ENCODE measurements at regions of chr9 and their contacts with region 1.

Region 1: GRCh38 chr9:20941174-20941690 is 90.2 kb downstream of the HACD4 start:
- DNase-seq: peak; percentile 4 to 80 (median 45)
- ATAC-seq: peak; percentile 90
- H3K4me3 ChIP-seq: no peak overlapping the region
- H3K4me3 Mint-ChIP-seq: no peak overlapping the region
- H3K27ac ChIP-seq: no peak overlapping the region
- H3K27ac Mint-ChIP-seq: no peak overlapping the region
- H3K4me1 ChIP-seq: peaks cover 3% of the 10 kb centered on the region
- H3K4me1 Mint-ChIP-seq: peaks cover 3% of the 10 kb centered on the region
- H3K27me3 ChIP-seq: no peaks in the 10 kb centered on the region
- H3K27me3 Mint-ChIP-seq: no peaks in the 10 kb centered on the region
- CTCF ChIP-seq: peak; percentile 82

Region 2: DNA sequence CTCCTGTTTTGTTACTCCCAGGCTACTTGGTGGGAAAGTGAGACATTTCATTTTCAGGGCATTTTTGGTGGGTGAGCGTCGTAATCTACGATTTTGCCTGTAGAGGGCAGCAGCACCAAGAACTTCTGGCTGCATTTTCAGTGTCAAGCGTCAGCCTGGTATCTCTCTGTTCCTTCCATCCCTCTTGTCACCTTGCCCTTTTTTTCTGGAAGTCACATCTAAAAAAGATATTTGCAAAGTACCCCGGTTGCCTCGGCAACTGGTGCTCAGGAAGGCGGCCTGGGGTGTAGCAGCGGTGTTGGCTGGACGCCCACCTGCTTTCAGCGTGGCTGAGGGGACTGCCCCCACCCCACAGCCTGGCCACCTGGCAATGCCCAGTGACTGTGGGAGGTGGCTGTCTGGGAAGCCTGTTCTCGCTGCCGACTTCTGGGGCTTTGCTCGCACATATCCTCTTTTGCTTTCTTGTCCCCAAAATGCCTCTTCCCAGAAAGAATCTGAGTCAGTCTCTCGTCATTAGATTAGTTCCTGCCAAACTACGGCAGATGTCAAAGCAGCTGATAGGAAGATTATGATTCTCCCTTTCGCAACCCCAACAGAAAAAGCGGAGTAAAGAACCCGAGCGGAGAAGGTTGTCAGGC is 1447.9 kb before region 1 on chr9:
- CTCF ChIA-PET with region 1: interaction called, 3 read pairs
- POLR2A ChIA-PET with region 1: no interaction called
- intact Hi-C with region 1: loop called in 1 of 2 experiments (anchors 5 kb)
- DNase-seq: peak in 6 of 9 experiments; percentile 10 to 60 (median 42)
- ATAC-seq: peak; percentile 63
- H3K4me3 ChIP-seq: no peak overlapping the region
- H3K4me3 Mint-ChIP-seq: peak overlapping the region; percentile 40
- H3K27ac ChIP-seq: no peak overlapping the region
- H3K27ac Mint-ChIP-seq: no peak overlapping the region
- H3K4me1 ChIP-seq: no peaks in the 10 kb centered on the region
- H3K4me1 Mint-ChIP-seq: peaks cover 9% of the 10 kb centered on the region
- H3K27me3 ChIP-seq: no peaks in the 10 kb centered on the region
- H3K27me3 Mint-ChIP-seq: peaks cover 15% of the 10 kb centered on the region
- CTCF ChIP-seq: peak; percentile 76

Region 3: DNA sequence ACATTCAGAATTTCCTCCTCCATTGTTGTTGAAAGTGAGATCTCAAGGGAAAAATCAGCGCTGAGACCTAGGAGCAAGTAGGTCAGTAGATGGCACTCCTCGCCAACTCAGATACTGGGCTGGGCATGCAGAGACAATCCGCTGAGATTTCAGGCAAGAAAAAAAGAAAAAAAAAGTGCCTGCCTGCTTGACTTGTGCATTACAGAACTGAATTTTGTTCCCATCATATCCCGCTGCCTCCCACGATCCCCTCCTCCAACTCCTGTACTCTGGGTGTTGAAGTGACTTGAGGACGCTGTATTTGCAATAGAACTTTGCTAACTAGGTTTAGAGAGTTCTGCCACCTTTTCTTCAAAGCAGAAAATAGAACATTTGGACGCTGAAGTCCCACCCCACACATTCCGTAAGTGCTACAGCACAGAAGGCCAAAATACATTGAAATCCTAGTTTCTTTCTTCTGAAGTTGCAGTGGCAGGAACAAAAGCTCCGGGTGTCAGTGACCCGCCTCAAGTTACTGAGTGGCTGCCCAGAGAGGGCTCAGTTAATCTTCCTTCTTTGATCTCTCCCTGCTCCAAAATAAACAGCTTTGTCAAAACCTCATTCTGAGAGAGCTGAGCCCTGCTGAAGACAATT is 584.7 kb before region 1 on chr9:
- CTCF ChIA-PET with region 1: interaction called, 10 read pairs
- POLR2A ChIA-PET with region 1: no interaction called
- intact Hi-C with region 1: loop called (anchors 1 kb)
- DNase-seq: peak; percentile 6 to 69 (median 42)
- ATAC-seq: peak; percentile 75
- H3K4me3 ChIP-seq: no peak overlapping the region
- H3K4me3 Mint-ChIP-seq: no peak overlapping the region
- H3K27ac ChIP-seq: no peak overlapping the region
- H3K27ac Mint-ChIP-seq: no peak overlapping the region
- H3K4me1 ChIP-seq: peaks cover 7% of the 10 kb centered on the region
- H3K4me1 Mint-ChIP-seq: peaks cover 38% of the 10 kb centered on the region
- H3K27me3 ChIP-seq: no peaks in the 10 kb centered on the region
- H3K27me3 Mint-ChIP-seq: no peaks in the 10 kb centered on the region
- CTCF ChIP-seq: peak; percentile 59

Region 4: GRCh38 chr9:20552874-20553575 is 388.2 kb before region 1 on chr9:
- CTCF ChIA-PET with region 1: interaction called, 3 read pairs
- POLR2A ChIA-PET with region 1: no interaction called
- intact Hi-C with region 1: loop called (anchors 2 to 5 kb)
- DNase-seq: peak in 2 of 9 experiments; percentile 7 to 29
- ATAC-seq: peak; percentile 17
- H3K4me3 ChIP-seq: no peak overlapping the region
- H3K4me3 Mint-ChIP-seq: peak overlapping the region; percentile 10
- H3K27ac ChIP-seq: no peak overlapping the region
- H3K27ac Mint-ChIP-seq: peak overlapping the region; percentile 23
- H3K4me1 ChIP-seq: peaks cover 37% of the 10 kb centered on the region
- H3K4me1 Mint-ChIP-seq: peaks cover 81% of the 10 kb centered on the region
- H3K27me3 ChIP-seq: no peaks in the 10 kb centered on the region
- H3K27me3 Mint-ChIP-seq: no peaks in the 10 kb centered on the region
- CTCF ChIP-seq: peak; percentile 27

Region 5: DNA sequence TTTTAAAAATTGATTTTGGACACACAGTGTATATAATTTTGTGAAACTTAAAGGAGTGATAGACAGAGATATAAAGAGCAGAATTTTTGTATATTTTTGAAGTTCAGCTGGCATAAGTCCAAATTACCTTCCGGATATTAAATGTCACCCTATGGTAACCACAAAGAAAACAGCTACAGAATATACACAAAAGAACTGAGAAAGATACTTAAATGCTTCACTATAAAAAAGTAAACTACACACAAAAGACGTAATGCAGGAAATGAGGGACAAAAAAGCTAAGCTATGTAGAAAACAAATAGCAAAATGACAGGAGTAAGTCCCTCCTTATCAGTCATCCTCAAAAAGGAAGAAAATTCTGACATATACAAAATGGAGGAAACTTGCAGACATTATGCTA is 60.8 kb after region 1 on chr9:
- CTCF ChIA-PET with region 1: no interaction called
- POLR2A ChIA-PET with region 1: no interaction called
- intact Hi-C with region 1: no loop called
- DNase-seq: peak in 2 of 9 experiments; percentile 23 to 49
- ATAC-seq: peak; percentile 63
- H3K4me3 ChIP-seq: no peak overlapping the region
- H3K4me3 Mint-ChIP-seq: peak overlapping the region; percentile 16
- H3K27ac ChIP-seq: peak overlapping the region in 1 of 2 experiments; percentile 67
- H3K27ac Mint-ChIP-seq: peak overlapping the region; percentile 87
- H3K4me1 ChIP-seq: peaks cover 4% of the 10 kb centered on the region
- H3K4me1 Mint-ChIP-seq: peaks cover 25% of the 10 kb centered on the region
- H3K27me3 ChIP-seq: no peaks in the 10 kb centered on the region
- H3K27me3 Mint-ChIP-seq: no peaks in the 10 kb centered on the region
- CTCF ChIP-seq: no peak

Region 6: DNA sequence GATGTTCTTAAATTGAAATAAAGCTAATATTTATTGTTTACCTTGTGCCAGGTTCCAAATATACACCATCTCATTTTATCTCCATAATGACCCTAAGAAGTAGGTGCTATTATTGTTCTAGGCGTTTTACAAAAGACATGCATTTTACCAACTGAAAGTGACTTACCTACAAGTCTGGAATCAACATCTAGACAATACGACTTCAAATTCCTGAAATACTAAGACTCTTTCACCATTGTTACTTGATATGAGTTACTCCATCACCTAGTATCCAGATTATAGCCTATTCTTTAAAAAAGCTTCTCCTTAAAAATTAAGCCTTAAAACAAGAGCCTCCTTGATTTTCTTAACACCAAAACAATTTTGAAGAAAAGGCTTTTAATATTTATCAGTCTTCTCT is 76.9 kb after region 1 on chr9:
- CTCF ChIA-PET with region 1: no interaction called
- POLR2A ChIA-PET with region 1: no interaction called
- intact Hi-C with region 1: loop called in 1 of 2 experiments (anchors 2 kb)
- DNase-seq: no peak
- ATAC-seq: no peak
- H3K4me3 ChIP-seq: no peak overlapping the region
- H3K4me3 Mint-ChIP-seq: no peak overlapping the region
- H3K27ac ChIP-seq: no peak overlapping the region
- H3K27ac Mint-ChIP-seq: no peak overlapping the region
- H3K4me1 ChIP-seq: no peaks in the 10 kb centered on the region
- H3K4me1 Mint-ChIP-seq: peaks cover 27% of the 10 kb centered on the region
- H3K27me3 ChIP-seq: no peaks in the 10 kb centered on the region
- H3K27me3 Mint-ChIP-seq: no peaks in the 10 kb centered on the region
- CTCF ChIP-seq: no peak